Head of caudate nucleus (tissue), 42 donors: ENCODE measurements at regions of chr2 and their contacts with region 1.

Region 1: GRCh38 chr2:44087036-44087713 is 81.5 kb upstream of the PPM1B start:
- DNase-seq: peak; percentile 77 to 97 (median 91)

Region 2: GRCh38 chr2:43905371-43905803 is 181.8 kb before region 1 on chr2:
- intact Hi-C with region 1: no loop called
- DNase-seq: no peak

Region 3: GRCh38 chr2:44167940-44168680 is 80.9 kb after region 1 on chr2:
- intact Hi-C with region 1: loop called (anchors 5 kb)
- DNase-seq: peak; percentile 95 to 100 (median 100)

Region 4: GRCh38 chr2:44291281-44292248 is 204.4 kb after region 1 on chr2:
- intact Hi-C with region 1: loop called (anchors 2 kb)
- DNase-seq: peak; percentile 56 to 92 (median 80)